K562 (cell line): ENCODE measurements at regions of chr1 and their contacts with region 1.

Region 1: DNA sequence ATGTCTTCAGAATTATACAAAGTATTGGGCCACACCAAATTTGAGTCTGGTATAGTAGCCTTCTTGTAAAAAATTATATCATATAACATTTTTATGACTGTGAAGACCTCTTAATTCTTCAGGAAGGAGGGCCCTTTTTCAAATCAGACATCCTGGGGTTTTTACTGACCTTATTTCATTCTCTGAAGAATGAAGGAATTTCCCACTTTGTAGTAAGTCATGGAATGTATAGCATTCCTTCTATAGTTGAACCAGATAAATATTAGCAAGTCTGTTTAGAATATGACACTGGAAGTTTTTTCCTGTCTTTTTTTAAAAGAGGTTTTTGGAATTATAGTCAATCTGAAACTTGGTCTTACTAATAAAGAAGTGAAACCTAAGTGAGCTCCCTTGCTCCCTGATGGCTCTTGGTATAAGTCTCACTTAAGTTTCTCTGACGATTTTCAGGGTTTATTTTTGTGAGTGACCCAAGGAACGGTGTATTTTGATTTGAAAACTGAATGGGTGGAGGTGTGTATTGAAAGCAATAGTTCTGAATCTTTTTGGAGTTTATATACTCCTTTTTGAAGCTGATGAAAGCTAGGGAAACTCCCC is 23.7 kb downstream of the SNX27 start:
- DNase-seq: no peak
- ATAC-seq: no peak
- H3K4me3 ChIP-seq: no peak overlapping the region
- H3K27ac ChIP-seq: no peak overlapping the region
- H3K4me1 ChIP-seq: peaks cover 4 to 5% of the 10 kb centered on the region in 2 experiments; a peak in 4 of 5 replicates
- H3K27me3 ChIP-seq: no peaks in the 10 kb centered on the region
- CTCF ChIP-seq: no peak
- EP300 ChIP-seq: no peak
- POLR2A ChIP-seq: no peak
- RAD21 ChIP-seq: no peak

Region 2: GRCh38 chr1:151619489-151620093 is 16.0 kb before region 1 on chr1:
- CTCF ChIA-PET with region 1: no interaction called
- POLR2A ChIA-PET with region 1: interaction called, 10 read pairs
- in situ Hi-C with region 1: no loop called
- intact Hi-C with region 1: no loop called
- DNase-seq: no peak
- ATAC-seq: peak; percentile 66
- H3K4me3 ChIP-seq: no peak overlapping the region
- H3K27ac ChIP-seq: no peak overlapping the region
- H3K4me1 ChIP-seq: no peaks in the 10 kb centered on the region
- H3K27me3 ChIP-seq: no peaks in the 10 kb centered on the region
- CTCF ChIP-seq: no peak
- EP300 ChIP-seq: no peak
- POLR2A ChIP-seq: no peak
- RAD21 ChIP-seq: no peak